Cardiac septum (tissue), 1 donor: ENCODE measurements at regions of chr2 and their contacts with region 1.

Region 1: GRCh38 chr2:88627056-88627855 is at the start of gene EIF2AK3:
- DNase-seq: peak; percentile 100
- total RNA-seq, gene EIF2AK3: 20.7 TPM

Region 2: GRCh38 chr2:88471083-88471942 is 155.9 kb before region 1 on chr2:
- intact Hi-C with region 1: no loop called
- DNase-seq: no peak

Region 3: GRCh38 chr2:88590998-88591613 is 36.1 kb before region 1 on chr2:
- intact Hi-C with region 1: loop called (anchors 5 kb)
- DNase-seq: no peak

Region 4: GRCh38 chr2:88600038-88600465 is 27.2 kb before region 1 on chr2:
- intact Hi-C with region 1: loop called (anchors 2 kb)
- DNase-seq: no peak

Region 5: GRCh38 chr2:88659538-88659916 is 32.3 kb after region 1 on chr2:
- intact Hi-C with region 1: loop called (anchors 1 kb)
- DNase-seq: no peak